AG04450 (cell line): ENCODE measurements at regions of chr4 and their contacts with region 1.

Region 1: DNA sequence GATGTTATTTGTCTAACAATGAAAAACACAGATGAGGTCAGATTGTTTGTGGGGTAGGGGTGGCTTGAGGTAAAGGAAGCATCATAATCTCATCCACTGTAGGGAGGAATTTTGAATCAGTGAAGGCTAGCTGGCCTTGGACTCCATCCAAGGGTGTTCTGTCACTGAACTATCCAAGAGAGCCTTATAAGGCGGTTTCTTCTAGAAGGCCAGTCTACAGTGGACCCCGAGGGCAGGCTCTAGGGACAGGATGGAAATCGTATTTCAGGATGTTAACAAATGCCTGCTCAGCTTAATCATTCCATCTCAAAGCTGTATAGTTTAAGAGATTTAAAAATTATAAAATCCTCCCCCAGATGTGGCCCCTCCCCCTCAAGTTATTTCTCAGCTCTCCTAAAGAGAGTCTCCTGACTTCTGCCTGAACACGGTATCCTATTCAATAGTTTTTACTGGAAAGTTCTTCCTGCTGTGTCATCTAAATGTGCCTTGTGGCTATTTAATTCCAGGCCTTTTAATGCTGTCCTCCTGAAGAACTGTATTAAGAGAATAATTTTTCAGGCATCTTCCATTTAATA is 8.0 kb downstream of the IGFBP7 start:
- DNase-seq: peak; percentile 68
- H3K4me3 ChIP-seq: no peak overlapping the region
- H3K27ac ChIP-seq: peak overlapping the region; percentile 69
- H3K27me3 ChIP-seq: no peaks in the 10 kb centered on the region
- CTCF ChIP-seq: no peak

Region 2: DNA sequence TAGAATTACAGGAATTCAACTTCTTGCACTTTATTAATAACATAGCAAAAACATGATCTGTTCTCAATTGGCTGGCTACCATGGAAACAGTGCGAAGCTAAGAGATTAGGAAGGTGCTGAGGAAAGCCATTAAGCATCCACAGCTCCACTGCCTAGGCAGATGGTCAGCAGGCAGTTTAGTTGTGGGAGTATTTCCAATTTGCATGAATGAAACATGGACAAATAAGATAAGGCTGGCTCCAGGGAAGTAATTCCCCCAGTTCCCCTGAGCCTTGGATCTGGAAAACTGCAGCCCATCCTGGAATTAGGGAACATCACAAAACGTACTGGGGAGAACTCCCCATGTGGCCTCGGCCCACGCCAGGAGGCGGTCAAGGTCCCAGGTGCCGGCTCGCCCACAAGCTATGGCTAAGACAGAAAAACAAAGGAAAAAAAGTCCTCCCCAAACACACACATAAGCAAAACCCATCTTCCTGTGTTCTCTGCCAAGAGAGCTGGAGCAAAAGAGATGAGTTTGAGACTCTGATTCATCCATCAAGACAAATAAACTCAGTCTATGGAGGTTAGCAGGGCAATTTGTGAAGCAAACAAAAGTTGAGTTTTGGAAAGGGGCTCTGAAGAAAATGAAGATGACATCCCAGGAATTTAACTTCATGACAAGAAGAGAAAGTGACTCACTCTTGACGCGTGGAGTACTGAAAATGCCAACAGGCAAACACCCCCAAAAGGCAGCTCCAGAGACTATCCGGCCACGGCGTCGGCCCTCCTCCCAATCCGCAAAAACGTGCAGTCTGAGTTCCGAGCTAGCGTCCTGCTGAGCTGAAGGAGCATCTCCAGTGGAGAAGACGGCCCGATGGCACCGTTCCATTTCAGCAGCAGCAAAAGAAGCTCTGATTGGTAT is 37.1 kb before region 1 on chr4:
- CTCF ChIA-PET with region 1: no interaction called
- POLR2A ChIA-PET with region 1: interaction called, 13 read pairs
- DNase-seq: peak; percentile 84
- H3K4me3 ChIP-seq: peak overlapping the region; percentile 31
- H3K27ac ChIP-seq: peak overlapping the region; percentile 88
- H3K27me3 ChIP-seq: no peaks in the 10 kb centered on the region
- CTCF ChIP-seq: no peak

Region 3: GRCh38 chr4:57154191-57154590 is 52.1 kb after region 1 on chr4:
- CTCF ChIA-PET with region 1: no interaction called
- POLR2A ChIA-PET with region 1: no interaction called
- DNase-seq: no peak
- H3K4me3 ChIP-seq: no peak overlapping the region
- H3K27ac ChIP-seq: no peak overlapping the region
- H3K27me3 ChIP-seq: no peaks in the 10 kb centered on the region
- CTCF ChIP-seq: no peak